ENCODE measurements at regions of chr12 and their contacts with region 1.

Region 1: GRCh38 chr12:133181238-133181959 is at the start of gene ZNF268:
- H3K4me3 ChIP-seq: peak within 1 kb of the TSS; percentile 96
- H3K27ac ChIP-seq: peak within 1 kb of the TSS; percentile 28; the same call in 1 of the 2 replicates
- H3K4me1 ChIP-seq: no peaks in the 10 kb centered on the region
- CTCF ChIP-seq: peak; percentile 84

Region 2: DNA sequence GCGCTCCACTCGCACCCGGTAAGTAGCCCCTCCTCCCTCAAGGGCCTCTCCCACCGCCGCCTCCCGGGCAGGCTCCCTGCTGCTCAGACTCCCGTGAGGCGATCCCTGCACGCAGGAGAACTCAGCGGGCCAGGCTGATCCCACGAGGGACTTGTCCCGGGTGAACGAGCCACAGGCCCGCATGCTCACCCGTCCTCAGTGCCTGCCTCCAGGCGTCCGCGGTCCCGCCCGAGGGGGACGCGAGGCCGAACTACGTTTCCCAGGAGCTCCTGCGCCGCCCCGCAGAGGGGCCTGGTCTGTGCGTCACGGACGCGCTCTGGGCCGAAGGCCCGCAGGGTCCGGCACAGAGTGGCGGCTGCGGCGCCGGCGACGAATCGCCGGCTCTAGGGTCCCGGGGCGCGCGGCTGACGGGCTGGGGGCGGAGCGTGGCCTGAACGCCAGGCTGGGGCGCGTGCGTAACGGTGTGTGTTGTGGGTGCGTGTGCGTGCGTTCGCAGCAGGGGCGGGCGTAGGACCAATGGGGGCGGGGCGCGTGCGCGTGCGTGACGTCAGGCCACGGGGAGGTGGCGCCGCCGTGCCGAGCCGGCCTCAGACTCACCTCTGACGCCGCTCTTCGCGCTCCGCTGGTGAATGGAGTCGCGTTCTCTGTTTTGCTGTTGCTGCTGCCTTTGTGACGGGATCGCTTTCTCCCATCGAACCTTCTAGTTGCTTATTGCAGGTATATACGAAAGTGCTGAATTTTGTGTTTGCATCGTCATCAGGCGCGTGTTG is 51.2 kb before region 1 on chr12 and contains the starts of genes ZNF10 and ZNF891:
- CTCF ChIA-PET with region 1: interaction called, 3 read pairs
- POLR2A ChIA-PET with region 1: interaction called, 12 read pairs
- H3K4me3 ChIP-seq: peak within 1 kb of the TSS; percentile 65
- H3K27ac ChIP-seq: peak within 1 kb of the TSS; percentile 95
- H3K4me1 ChIP-seq: no peaks in the 10 kb centered on the region
- CTCF ChIP-seq: no peak

Region 3: DNA sequence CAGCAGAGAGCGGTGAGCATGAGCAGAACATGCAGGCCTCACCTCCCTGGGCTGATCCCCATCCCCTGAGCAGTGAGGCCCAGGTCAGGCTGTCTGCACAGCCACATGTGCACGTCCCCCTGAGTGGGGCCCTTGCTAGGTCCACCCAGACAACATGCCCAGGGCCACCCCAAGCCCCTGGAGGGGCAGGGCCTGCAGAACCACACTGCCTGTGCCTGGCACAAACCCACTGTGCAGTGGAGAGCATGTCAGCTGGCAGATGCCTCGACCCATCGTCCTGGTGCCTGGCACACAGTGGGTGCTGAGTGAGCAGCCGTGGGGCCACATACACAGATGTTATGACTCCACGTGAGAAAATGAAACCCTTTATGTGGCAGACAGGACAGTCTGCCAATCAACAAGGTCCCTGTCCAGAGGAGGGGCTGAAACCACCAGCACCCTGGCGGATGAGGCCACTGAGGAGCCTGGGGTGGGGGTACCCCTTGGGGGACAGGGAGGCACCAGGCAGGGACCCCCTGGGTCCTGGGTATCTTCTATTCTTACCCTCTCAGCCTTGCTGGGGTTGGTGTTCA is 46.0 kb after region 1 on chr12:
- CTCF ChIA-PET with region 1: no interaction called
- POLR2A ChIA-PET with region 1: no interaction called
- H3K4me3 ChIP-seq: no peak overlapping the region
- H3K27ac ChIP-seq: no peak overlapping the region
- H3K4me1 ChIP-seq: no peaks in the 10 kb centered on the region
- CTCF ChIP-seq: no peak